AG04450 (cell line): ENCODE measurements at regions of chr10 and their contacts with region 1.

Region 1: GRCh38 chr10:97612386-97612785 is 20.9 kb downstream of the MORN4 start:
- DNase-seq: peak; percentile 15
- H3K4me3 ChIP-seq: no peak overlapping the region
- H3K27ac ChIP-seq: no peak overlapping the region
- H3K27me3 ChIP-seq: no peaks in the 10 kb centered on the region
- CTCF ChIP-seq: peak; percentile 32; the same call in 1 of the 2 replicates

Region 2: DNA sequence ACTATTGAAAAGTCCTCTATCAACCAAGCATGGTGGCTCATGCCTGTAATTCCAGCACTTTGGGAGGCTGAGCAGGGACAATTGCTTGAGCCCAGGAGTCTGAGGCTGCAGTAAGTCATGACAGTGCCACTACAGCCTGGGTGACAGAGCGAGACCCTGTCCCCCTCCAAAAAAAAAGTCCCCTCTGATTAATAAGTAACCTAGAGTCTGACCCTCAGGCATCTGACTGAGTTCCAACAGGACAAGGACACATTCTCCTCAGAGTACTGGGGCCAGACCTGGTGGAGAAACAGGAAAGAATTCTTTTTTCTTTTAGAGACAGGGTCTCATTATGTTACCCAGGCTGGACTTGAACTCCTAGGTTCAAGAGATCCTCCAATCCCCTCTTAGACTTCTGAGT is 10.9 kb after region 1 on chr10:
- CTCF ChIA-PET with region 1: interaction called, 13 read pairs
- POLR2A ChIA-PET with region 1: no interaction called
- DNase-seq: no peak
- H3K4me3 ChIP-seq: no peak overlapping the region
- H3K27ac ChIP-seq: no peak overlapping the region
- H3K27me3 ChIP-seq: no peaks in the 10 kb centered on the region
- CTCF ChIP-seq: no peak